CD4-positive, alpha-beta memory T cell (primary cell): ENCODE measurements at regions of chr14 and their contacts with region 1.

Region 1: DNA sequence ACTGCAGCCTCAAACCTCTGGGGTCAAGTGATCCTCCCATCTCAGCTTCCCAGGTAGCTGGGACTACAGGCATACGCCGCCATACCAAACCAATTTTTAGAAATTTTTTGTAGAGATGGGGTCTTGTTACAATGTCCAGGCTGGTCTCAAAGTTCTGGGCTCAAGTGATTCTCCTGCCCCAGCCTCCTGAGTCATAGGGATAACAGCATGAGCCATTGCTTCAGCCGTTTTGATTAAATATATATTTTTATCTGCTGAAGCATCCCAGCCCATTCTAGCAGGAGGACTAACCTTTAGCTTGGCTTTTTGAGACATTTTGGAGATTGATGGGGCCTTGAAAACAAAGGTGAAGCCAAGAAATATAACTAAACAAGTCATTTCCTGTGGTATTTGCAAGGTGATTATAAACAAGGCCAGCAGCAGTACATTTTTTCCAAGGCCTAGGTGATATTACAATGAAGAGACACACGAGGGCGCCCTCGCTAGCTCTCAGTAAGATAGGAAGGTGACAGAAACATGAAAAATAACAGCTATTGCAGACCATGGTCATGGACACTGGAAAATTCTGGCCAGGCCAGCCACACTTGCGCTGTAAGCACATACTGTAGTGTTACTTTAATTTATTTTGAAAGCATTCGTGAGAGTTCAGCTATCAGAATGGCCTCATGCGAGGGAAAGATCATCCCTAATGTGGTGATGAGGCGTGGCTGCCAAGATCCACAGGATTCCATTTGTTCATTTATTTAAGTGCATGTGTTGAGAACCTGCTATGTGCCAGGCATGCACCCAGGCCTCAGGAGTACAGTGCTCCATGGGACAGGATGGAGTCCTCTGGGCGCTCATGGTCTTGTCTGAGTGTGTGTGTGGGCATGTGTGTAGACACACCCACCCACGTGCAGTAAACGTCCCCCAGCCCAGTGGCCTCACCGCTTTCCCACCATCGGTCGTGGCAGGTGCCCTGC is 63.5 kb downstream of the DGLUCY start:
- DNase-seq: peak; percentile 75 to 79 (median 77)
- H3K4me3 ChIP-seq: no peak overlapping the region
- H3K4me3 Mint-ChIP-seq: no peak overlapping the region
- H3K27ac ChIP-seq: peak overlapping the region; percentile 35
- H3K27ac Mint-ChIP-seq: peak overlapping the region; percentile 65 to 97 (median 94)
- H3K4me1 ChIP-seq: peaks cover 12% of the 10 kb centered on the region
- H3K4me1 Mint-ChIP-seq: peaks cover 13 to 23% (median 15%) of the 10 kb centered on the region in 4 donors
- H3K27me3 ChIP-seq: no peaks in the 10 kb centered on the region
- H3K27me3 Mint-ChIP-seq: no peaks in the 10 kb centered on the region

Region 2: GRCh38 chr14:89589400-89590118 is 1587.8 kb before region 1 on chr14:
- CTCF ChIA-PET with region 1: no interaction called
- POLR2A ChIA-PET with region 1: no interaction called
- intact Hi-C with region 1: no loop called
- DNase-seq: no peak
- H3K4me3 ChIP-seq: no peak overlapping the region
- H3K4me3 Mint-ChIP-seq: peak overlapping the region in 1 of 8 donors; percentile 29
- H3K27ac ChIP-seq: no peak overlapping the region
- H3K27ac Mint-ChIP-seq: peak overlapping the region in 3 of 7 donors; percentile 33 to 79 (median 46)
- H3K4me1 ChIP-seq: peaks cover 22% of the 10 kb centered on the region
- H3K4me1 Mint-ChIP-seq: peaks cover 52 to 84% (median 66%) of the 10 kb centered on the region in 4 donors
- H3K27me3 ChIP-seq: no peaks in the 10 kb centered on the region
- H3K27me3 Mint-ChIP-seq: no peaks in the 10 kb centered on the region

Region 3: GRCh38 chr14:90894241-90894640 is 283.1 kb before region 1 on chr14:
- CTCF ChIA-PET with region 1: interaction called, 246 read pairs
- POLR2A ChIA-PET with region 1: no interaction called
- intact Hi-C with region 1: no loop called
- DNase-seq: no peak
- H3K4me3 ChIP-seq: no peak overlapping the region
- H3K4me3 Mint-ChIP-seq: no peak overlapping the region
- H3K27ac ChIP-seq: no peak overlapping the region
- H3K27ac Mint-ChIP-seq: peak overlapping the region in 1 of 7 donors; percentile 4
- H3K4me1 ChIP-seq: no peaks in the 10 kb centered on the region
- H3K4me1 Mint-ChIP-seq: peaks cover 0 to 3% (median under 1%) of the 10 kb centered on the region in 4 donors
- H3K27me3 ChIP-seq: no peaks in the 10 kb centered on the region
- H3K27me3 Mint-ChIP-seq: no peaks in the 10 kb centered on the region

Region 4: DNA sequence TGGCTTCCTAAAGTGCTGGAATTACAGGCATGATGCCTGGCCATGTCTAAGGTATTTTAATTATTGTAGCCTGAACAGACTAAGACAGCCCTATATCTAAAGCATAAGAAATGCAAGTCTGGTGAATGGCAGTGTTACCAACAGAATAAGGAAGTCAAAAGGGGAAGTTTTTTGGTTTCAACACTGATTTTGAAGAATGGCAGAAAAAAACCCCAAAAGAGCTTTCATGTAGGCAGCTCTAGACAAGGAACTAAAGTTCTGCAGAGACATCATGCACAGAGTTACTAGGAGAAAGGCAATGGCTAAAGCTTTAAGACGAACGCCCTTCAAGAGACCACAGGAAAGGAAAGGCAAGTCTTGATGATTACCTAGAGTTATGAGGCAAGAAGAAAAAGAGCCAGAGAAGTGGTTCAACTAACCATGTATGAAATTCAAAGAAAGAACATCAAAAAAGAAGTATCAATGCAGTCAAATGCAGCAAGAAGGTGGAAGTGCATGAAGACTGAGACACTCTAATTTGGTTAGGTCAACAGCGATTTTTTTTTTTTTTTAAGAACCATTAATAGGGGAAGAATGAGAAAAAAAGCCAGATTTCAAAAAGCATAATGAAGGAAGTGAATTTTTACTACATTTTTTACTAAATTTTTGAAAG is 167.7 kb before region 1 on chr14:
- CTCF ChIA-PET with region 1: interaction called, 14 read pairs
- POLR2A ChIA-PET with region 1: interaction called, 3 read pairs
- intact Hi-C with region 1: no loop called
- DNase-seq: peak in 1 of 5 donors; percentile 13
- H3K4me3 ChIP-seq: no peak overlapping the region
- H3K4me3 Mint-ChIP-seq: peak overlapping the region in 6 of 8 donors; percentile 6 to 62 (median 25)
- H3K27ac ChIP-seq: no peak overlapping the region
- H3K27ac Mint-ChIP-seq: peak overlapping the region in 1 of 7 donors; percentile 1
- H3K4me1 ChIP-seq: peaks cover 33% of the 10 kb centered on the region
- H3K4me1 Mint-ChIP-seq: peaks cover 27 to 51% (median 42%) of the 10 kb centered on the region in 4 donors
- H3K27me3 ChIP-seq: no peaks in the 10 kb centered on the region
- H3K27me3 Mint-ChIP-seq: no peaks in the 10 kb centered on the region

Region 5: GRCh38 chr14:91114079-91115065 is 63.0 kb before region 1 on chr14:
- CTCF ChIA-PET with region 1: interaction called, 15 read pairs
- POLR2A ChIA-PET with region 1: interaction called, 3 read pairs
- intact Hi-C with region 1: no loop called
- DNase-seq: peak; percentile 64 to 82 (median 74)
- H3K4me3 ChIP-seq: peak overlapping the region; percentile 85 to 95
- H3K4me3 Mint-ChIP-seq: peak overlapping the region; percentile 88 to 99 (median 94)
- H3K27ac ChIP-seq: peak overlapping the region; percentile 94
- H3K27ac Mint-ChIP-seq: peak overlapping the region; percentile 94 to 99 (median 97)
- H3K4me1 ChIP-seq: peaks cover 72% of the 10 kb centered on the region
- H3K4me1 Mint-ChIP-seq: peaks cover 54 to 84% (median 69%) of the 10 kb centered on the region in 4 donors
- H3K27me3 ChIP-seq: no peaks in the 10 kb centered on the region
- H3K27me3 Mint-ChIP-seq: no peaks in the 10 kb centered on the region

Region 6: GRCh38 chr14:91193069-91193468 is 15.7 kb after region 1 on chr14:
- CTCF ChIA-PET with region 1: interaction called, 32 read pairs
- POLR2A ChIA-PET with region 1: interaction called, 14 read pairs
- intact Hi-C with region 1: no loop called
- DNase-seq: no peak
- H3K4me3 ChIP-seq: no peak overlapping the region
- H3K4me3 Mint-ChIP-seq: peak overlapping the region in 1 of 8 donors; percentile 55
- H3K27ac ChIP-seq: no peak overlapping the region
- H3K27ac Mint-ChIP-seq: peak overlapping the region in 4 of 7 donors; percentile 3 to 44 (median 40)
- H3K4me1 ChIP-seq: peaks cover 14% of the 10 kb centered on the region
- H3K4me1 Mint-ChIP-seq: peaks cover 18 to 31% (median 25%) of the 10 kb centered on the region in 4 donors
- H3K27me3 ChIP-seq: no peaks in the 10 kb centered on the region
- H3K27me3 Mint-ChIP-seq: no peaks in the 10 kb centered on the region

Region 7: GRCh38 chr14:91244501-91244901 is 67.1 kb after region 1 on chr14 and contains the start of gene GPR68:
- CTCF ChIA-PET with region 1: interaction called, 52 read pairs
- POLR2A ChIA-PET with region 1: interaction called, 51 read pairs
- intact Hi-C with region 1: loop called (anchors 2 kb)
- DNase-seq: peak in 4 of 5 donors; percentile 40 to 69 (median 43)
- H3K4me3 ChIP-seq: peak within 1 kb of the TSS; percentile 66 to 96
- H3K4me3 Mint-ChIP-seq: peak within 1 kb of the TSS; percentile 91 to 99 (median 94)
- H3K27ac ChIP-seq: peak within 1 kb of the TSS; percentile 99
- H3K27ac Mint-ChIP-seq: peak within 1 kb of the TSS; percentile 92 to 100 (median 99)
- H3K4me1 ChIP-seq: peaks cover 94% of the 10 kb centered on the region
- H3K4me1 Mint-ChIP-seq: peaks cover 64 to 98% (median 82%) of the 10 kb centered on the region in 4 donors
- H3K27me3 ChIP-seq: no peaks in the 10 kb centered on the region
- H3K27me3 Mint-ChIP-seq: no peaks in the 10 kb centered on the region
- total RNA-seq, gene GPR68: 10.6 to 10.8 TPM

Region 8: DNA sequence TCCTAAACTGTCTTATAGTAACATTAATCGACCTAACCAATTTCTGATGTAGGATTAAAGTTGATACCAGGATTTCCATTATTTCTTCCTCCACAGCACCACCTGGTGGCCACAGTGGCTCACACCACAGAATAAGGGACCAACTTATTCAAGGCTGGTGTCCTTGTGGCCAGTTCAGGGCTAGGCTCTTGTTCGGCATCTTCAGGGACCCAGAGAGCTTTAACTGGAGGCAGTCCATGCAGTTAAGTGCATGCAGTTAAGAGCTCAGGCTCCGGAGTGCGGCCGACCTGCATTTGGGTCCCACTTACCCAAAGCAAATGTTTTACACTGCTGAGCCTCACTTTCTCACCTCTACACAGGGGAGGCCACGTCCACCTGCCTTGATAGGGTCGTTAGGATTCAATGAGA is 109.2 kb after region 1 on chr14:
- CTCF ChIA-PET with region 1: interaction called, 480 read pairs
- POLR2A ChIA-PET with region 1: interaction called, 18 read pairs
- intact Hi-C with region 1: loop called (anchors 1 kb)
- DNase-seq: peak; percentile 66 to 77 (median 74)
- H3K4me3 ChIP-seq: no peak overlapping the region
- H3K4me3 Mint-ChIP-seq: no peak overlapping the region
- H3K27ac ChIP-seq: no peak overlapping the region
- H3K27ac Mint-ChIP-seq: peak overlapping the region in 6 of 7 donors; percentile 53 to 92 (median 76)
- H3K4me1 ChIP-seq: peaks cover 12% of the 10 kb centered on the region
- H3K4me1 Mint-ChIP-seq: peaks cover 3 to 19% (median 6%) of the 10 kb centered on the region in 4 donors
- H3K27me3 ChIP-seq: no peaks in the 10 kb centered on the region
- H3K27me3 Mint-ChIP-seq: no peaks in the 10 kb centered on the region